Posterior vena cava (tissue), 2 donors: ENCODE measurements at regions of chr9 and their contacts with region 1.

Region 1: DNA sequence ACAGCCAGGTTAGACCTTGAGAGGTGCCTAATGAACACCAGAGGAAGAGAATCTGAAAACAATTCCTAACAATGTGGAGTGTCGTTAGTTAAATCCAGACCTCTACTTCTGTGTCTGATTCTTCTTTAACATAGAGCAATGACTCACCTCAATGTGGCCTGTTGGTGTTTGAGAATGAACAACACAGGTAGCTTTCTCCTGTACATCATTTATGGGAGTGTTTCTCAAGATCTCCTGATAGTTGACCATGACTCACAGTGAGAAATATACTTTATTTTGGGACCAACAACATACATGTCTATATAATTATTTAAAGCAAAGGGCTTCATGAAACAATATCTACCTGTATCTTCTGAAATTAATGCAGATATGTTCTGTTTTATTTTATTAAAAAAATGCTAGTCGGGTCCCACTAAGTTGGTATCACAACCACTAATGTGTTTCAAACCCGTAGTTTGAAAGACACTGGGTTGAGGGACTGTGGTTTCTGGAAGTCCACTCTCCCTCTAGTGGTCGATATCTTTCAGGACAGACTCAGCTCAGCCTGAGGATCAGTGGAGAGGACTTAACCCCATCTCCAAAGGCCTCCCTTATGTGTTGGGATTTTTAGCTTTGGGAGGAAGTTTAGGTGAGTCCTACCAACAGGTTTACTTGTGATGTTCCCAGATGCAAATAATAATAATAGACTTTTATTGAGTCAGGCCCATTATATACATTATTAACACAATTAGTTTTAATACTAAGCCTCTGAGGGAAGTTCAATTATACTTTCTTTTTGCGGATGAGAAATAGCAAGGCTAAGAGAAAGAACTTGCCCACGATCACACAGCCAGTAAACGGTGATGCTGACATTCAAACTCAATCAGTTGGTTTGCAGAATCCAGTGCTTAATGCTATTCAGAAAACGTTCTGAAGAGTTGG is 70.0 kb upstream of the KLF9 start:
- DNase-seq: no peak

Region 2: DNA sequence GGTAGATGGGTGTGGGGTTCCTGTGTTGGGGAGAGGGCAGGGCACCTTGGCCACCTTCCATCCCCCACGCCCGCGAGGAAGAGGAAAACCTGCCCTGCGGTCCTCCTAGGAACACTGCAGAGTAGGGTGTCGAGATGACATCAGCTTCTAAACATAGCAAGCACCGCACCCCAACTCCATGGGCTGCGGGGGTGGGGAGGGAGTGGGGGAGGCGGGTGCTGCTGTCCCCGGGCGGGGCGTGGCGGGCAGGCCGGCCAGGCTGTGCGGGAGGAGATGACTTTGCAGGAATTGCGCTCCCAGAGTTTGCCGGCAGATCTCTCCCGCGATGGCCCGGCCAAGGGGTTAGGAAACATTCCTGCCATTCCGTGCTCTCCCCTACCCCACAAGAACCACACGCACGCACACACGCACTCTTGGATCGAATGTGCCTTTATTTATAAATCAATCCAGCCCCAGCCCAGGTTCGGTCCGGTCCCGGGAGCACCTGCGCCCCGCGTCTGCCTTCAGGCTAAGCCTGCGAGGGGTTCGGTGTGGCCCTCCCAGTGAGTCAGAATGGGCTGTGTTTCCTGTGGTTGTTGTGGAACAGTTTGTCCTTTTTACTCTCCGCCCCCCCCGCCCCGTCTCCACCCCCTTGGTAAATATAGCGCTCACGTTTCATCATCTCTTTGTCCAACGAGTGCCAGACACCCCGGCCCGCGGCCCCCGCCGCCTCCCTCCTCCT is 64.8 kb before region 1 on chr9:
- intact Hi-C with region 1: loop called (anchors 2 to 5 kb)
- DNase-seq: peak; percentile 99

Region 3: GRCh38 chr9:70589571-70590314 is 105.3 kb after region 1 on chr9:
- intact Hi-C with region 1: loop called (anchors 10 kb)
- DNase-seq: peak; percentile 88